Mammary epithelial cell (primary cell): ENCODE measurements at regions of chr3 and their contacts with region 1.

Region 1: GRCh38 chr3:46895204-46895660 is 17.7 kb downstream of the PTH1R start:
- DNase-seq: peak; percentile 25
- H3K4me3 ChIP-seq: no peak overlapping the region
- H3K27ac ChIP-seq: no peak overlapping the region
- H3K4me1 ChIP-seq: peaks cover 11% of the 10 kb centered on the region
- H3K27me3 ChIP-seq: no peaks in the 10 kb centered on the region
- CTCF ChIP-seq: peak; percentile 70 to 88

Region 2: GRCh38 chr3:46276502-46277099 is 618.6 kb before region 1 on chr3:
- CTCF ChIA-PET with region 1: interaction called, 20 read pairs
- dilution Hi-C with region 1: no loop called
- in situ Hi-C with region 1: no loop called
- intact Hi-C with region 1: no loop called
- DNase-seq: peak; percentile 54
- H3K4me3 ChIP-seq: no peak overlapping the region
- H3K27ac ChIP-seq: no peak overlapping the region
- H3K4me1 ChIP-seq: no peaks in the 10 kb centered on the region
- H3K27me3 ChIP-seq: peaks cover 3% of the 10 kb centered on the region
- CTCF ChIP-seq: peak; percentile 66 to 78

Region 3: GRCh38 chr3:46663591-46664135 is 231.6 kb before region 1 on chr3:
- CTCF ChIA-PET with region 1: interaction called, 3 read pairs
- dilution Hi-C with region 1: no loop called
- in situ Hi-C with region 1: no loop called
- intact Hi-C with region 1: loop called (anchors 1 kb)
- DNase-seq: no peak
- H3K4me3 ChIP-seq: no peak overlapping the region
- H3K27ac ChIP-seq: no peak overlapping the region
- H3K4me1 ChIP-seq: peaks cover 21% of the 10 kb centered on the region
- H3K27me3 ChIP-seq: no peaks in the 10 kb centered on the region
- CTCF ChIP-seq: peak; percentile 21 to 45

Region 4: GRCh38 chr3:46695177-46695961 is 199.9 kb before region 1 on chr3:
- CTCF ChIA-PET with region 1: no interaction called
- dilution Hi-C with region 1: no loop called
- in situ Hi-C with region 1: loop called in 1 of 2 experiments (anchors 5 kb)
- intact Hi-C with region 1: no loop called
- DNase-seq: no peak
- H3K4me3 ChIP-seq: no peak overlapping the region
- H3K27ac ChIP-seq: no peak overlapping the region
- H3K4me1 ChIP-seq: peaks cover 42% of the 10 kb centered on the region
- H3K27me3 ChIP-seq: no peaks in the 10 kb centered on the region
- CTCF ChIP-seq: peak; percentile 34 to 42

Region 5: GRCh38 chr3:46866720-46867549 is 28.3 kb before region 1 on chr3:
- CTCF ChIA-PET with region 1: no interaction called
- dilution Hi-C with region 1: no loop called
- in situ Hi-C with region 1: no loop called
- intact Hi-C with region 1: loop called (anchors 1 kb)
- DNase-seq: peak; percentile 22
- H3K4me3 ChIP-seq: no peak overlapping the region
- H3K27ac ChIP-seq: no peak overlapping the region
- H3K4me1 ChIP-seq: no peaks in the 10 kb centered on the region
- H3K27me3 ChIP-seq: no peaks in the 10 kb centered on the region
- CTCF ChIP-seq: peak; percentile 74 to 95

Region 6: GRCh38 chr3:47865192-47865591 is 970.0 kb after region 1 on chr3:
- CTCF ChIA-PET with region 1: no interaction called
- dilution Hi-C with region 1: no loop called
- in situ Hi-C with region 1: no loop called
- intact Hi-C with region 1: no loop called
- DNase-seq: no peak
- H3K4me3 ChIP-seq: no peak overlapping the region
- H3K27ac ChIP-seq: no peak overlapping the region
- H3K4me1 ChIP-seq: no peaks in the 10 kb centered on the region
- H3K27me3 ChIP-seq: no peaks in the 10 kb centered on the region
- CTCF ChIP-seq: no peak